Prostate gland (tissue), 2 donors: ENCODE measurements at regions of chr1 and their contacts with region 1.

Region 1: DNA sequence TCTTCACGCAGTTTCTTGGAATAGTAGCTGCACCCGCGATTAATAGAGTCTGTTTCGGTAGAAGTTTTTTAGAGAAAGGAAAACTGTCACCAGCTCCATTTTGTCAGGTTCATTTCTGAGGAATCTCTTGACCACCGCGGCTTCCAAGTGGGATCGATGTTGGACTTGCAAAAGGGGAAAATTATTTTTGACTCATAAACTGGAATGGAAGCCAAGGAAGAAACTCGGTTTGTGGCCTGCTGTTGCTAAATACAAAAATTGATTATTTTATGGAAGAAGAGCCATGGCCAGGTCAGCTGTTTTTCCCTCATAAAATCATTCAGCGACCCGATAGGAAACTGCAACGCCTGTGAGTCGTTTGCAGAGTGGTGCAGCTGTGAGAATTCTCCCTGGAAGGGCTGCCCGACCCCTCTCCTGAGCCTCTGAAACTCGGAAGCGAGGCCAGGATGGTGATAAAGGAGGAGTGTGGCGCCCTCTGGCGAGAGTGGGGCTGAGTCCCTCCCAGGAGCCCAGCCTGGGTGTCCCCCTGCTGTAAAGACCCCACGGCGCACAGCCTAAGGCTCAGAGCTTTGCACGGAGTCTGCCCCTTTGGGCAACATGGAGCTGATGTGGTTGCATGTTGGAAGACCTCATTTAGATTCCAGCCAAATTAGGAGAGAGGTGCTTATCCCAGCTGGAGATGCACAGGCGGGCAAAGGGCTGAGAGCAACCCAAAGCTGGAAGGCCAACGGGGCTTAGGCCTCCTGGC is 83.6 kb upstream of the SLC25A33 start:
- DNase-seq: peak; percentile 53
- H3K4me3 ChIP-seq: no peak overlapping the region
- H3K27ac ChIP-seq: no peak overlapping the region
- H3K4me1 ChIP-seq: no peaks in the 10 kb centered on the region
- H3K27me3 ChIP-seq: no peaks in the 10 kb centered on the region
- CTCF ChIP-seq: peak; percentile 73 to 81 (median 80)
- POLR2A ChIP-seq: no peak

Region 2: GRCh38 chr1:9128520-9129265 is 327.0 kb before region 1 on chr1 and contains the start of gene GPR157:
- intact Hi-C with region 1: no loop called
- DNase-seq: peak; percentile 91
- H3K4me3 ChIP-seq: peak within 1 kb of the TSS; percentile 68 to 69
- H3K27ac ChIP-seq: peak within 1 kb of the TSS; percentile 88
- H3K4me1 ChIP-seq: peaks cover 4% of the 10 kb centered on the region
- H3K27me3 ChIP-seq: no peaks in the 10 kb centered on the region
- CTCF ChIP-seq: peak in 2 of 4 experiments; percentile 26 to 29
- POLR2A ChIP-seq: peak; percentile 79
- total RNA-seq, gene GPR157: 5.6 to 10.7 TPM

Region 3: GRCh38 chr1:9269078-9269501 is 186.6 kb before region 1 on chr1:
- intact Hi-C with region 1: loop called (anchors 5 kb)
- DNase-seq: no peak
- H3K4me3 ChIP-seq: no peak overlapping the region
- H3K27ac ChIP-seq: no peak overlapping the region
- H3K4me1 ChIP-seq: no peaks in the 10 kb centered on the region
- H3K27me3 ChIP-seq: no peaks in the 10 kb centered on the region
- CTCF ChIP-seq: no peak
- POLR2A ChIP-seq: no peak

Region 4: GRCh38 chr1:9410737-9411297 is 44.8 kb before region 1 on chr1:
- intact Hi-C with region 1: no loop called
- DNase-seq: no peak
- H3K4me3 ChIP-seq: no peak overlapping the region
- H3K27ac ChIP-seq: no peak overlapping the region
- H3K4me1 ChIP-seq: no peaks in the 10 kb centered on the region
- H3K27me3 ChIP-seq: no peaks in the 10 kb centered on the region
- CTCF ChIP-seq: no peak
- POLR2A ChIP-seq: no peak

Region 5: DNA sequence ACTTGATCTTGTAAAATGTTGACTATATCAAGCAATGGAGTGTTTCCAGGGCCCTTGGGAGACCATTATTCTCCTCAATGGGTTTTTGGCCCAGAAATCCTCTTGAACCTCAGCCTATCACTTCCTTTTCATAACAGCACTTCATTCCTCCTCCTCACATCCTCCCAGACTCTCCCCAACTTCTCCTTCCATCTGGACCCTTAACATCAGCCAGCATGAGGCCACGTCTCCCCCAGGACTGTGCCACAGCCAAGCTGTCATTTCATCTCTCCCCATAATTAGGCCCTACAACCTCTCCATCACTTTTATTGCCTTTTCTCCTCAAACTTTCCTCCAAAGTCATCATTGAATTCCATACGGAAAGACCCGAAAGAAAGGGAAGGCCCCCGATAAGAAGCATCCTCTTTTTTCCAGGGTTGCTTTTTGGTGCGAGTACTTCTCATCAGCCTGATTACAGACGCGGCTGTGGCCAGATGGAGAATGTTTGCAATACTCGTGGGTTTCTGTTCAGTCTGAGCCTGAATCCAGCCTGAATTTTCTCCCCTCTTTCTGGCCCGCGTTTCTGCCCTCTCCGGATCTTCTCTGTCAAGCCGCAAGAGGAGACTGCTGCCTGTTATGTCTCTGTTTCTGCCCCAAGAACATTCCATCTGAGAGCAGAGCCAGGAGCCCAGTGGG is 30.9 kb after region 1 on chr1:
- intact Hi-C with region 1: no loop called
- DNase-seq: no peak
- H3K4me3 ChIP-seq: no peak overlapping the region
- H3K27ac ChIP-seq: no peak overlapping the region
- H3K4me1 ChIP-seq: no peaks in the 10 kb centered on the region
- H3K27me3 ChIP-seq: no peaks in the 10 kb centered on the region
- CTCF ChIP-seq: no peak
- POLR2A ChIP-seq: no peak

Region 6: DNA sequence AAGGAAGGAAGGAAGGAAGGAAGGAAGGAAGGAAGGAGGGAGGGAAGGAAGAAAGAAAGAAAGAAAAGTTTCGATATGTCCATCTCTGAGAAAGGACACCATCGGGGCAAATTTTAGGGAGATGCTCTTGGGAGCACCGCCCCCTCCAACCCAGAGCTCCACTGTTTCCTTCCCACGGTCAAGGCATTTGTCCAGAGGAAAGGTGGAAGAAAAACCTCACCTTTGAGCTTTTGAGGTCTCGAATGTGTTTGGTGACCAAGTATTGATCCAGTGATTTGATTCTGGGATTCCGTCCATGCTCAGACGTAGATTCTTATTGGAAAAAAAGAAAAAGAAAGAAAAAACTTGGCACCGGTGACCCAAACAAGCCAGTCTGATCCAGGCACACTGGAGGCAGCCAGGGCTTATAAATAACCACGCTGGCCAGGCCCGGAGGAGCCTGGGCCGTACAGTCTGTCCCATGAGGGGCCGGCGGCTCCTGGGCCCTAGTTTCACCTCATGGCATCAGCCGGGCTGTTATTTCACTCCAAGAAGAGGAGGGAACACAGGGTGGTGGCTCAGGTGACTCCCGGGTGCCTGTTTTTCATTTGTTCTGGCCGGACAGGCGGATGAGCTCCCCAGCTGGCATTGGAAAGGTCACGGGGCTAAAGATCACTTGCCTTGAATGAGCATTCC is 47.5 kb after region 1 on chr1:
- intact Hi-C with region 1: no loop called
- DNase-seq: no peak
- H3K4me3 ChIP-seq: no peak overlapping the region
- H3K27ac ChIP-seq: no peak overlapping the region
- H3K4me1 ChIP-seq: no peaks in the 10 kb centered on the region
- H3K27me3 ChIP-seq: no peaks in the 10 kb centered on the region
- CTCF ChIP-seq: no peak
- POLR2A ChIP-seq: no peak